Heart right ventricle (tissue), 16 donors: ENCODE measurements at regions of chr19 and their contacts with region 1.

Region 1: DNA sequence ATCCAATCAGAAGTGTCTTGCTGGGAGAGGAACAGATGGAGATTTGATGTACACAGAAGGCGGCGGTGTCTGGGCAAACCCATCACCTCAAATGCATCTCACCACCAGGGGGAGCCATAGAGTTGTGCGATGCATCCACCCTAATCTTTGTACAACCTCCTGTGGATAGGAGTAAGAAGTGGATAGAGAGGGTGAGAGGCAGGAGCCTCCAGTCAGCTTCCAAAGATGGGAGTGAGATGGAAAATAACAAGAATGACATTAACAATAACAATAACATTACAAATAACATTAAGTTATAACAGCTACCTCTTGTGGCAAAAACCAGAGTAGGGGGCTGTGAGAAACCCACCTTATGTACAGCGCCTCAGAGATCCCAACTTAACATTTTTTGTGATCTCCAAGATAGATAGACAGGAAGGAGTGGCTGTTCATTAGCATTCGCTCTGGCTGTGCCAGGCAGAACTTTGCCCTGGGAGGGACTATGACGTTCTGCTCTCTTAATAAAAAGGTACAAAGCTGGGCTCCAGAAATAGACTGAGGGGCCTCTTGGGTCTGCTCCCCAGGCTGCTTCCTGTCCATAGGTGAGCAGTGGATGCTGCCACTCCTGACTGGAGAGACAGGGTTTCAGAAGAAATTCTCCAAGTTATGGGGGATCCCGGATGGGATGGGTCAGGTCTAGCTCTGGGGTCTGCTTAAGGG is 5.2 kb upstream of the CEACAM18 start:
- DNase-seq: peak; percentile 50 to 79
- ATAC-seq: peak in 5 of 8 donors; percentile 62 to 79 (median 77)
- H3K4me3 ChIP-seq: no peak overlapping the region
- H3K27ac ChIP-seq: no peak overlapping the region
- H3K4me1 ChIP-seq: no peaks in the 10 kb centered on the region
- H3K27me3 ChIP-seq: peaks cover 0 to 73% (median 28%) of the 10 kb centered on the region in 7 donors
- CTCF ChIP-seq: peak; percentile 75 to 94 (median 89)

Region 2: DNA sequence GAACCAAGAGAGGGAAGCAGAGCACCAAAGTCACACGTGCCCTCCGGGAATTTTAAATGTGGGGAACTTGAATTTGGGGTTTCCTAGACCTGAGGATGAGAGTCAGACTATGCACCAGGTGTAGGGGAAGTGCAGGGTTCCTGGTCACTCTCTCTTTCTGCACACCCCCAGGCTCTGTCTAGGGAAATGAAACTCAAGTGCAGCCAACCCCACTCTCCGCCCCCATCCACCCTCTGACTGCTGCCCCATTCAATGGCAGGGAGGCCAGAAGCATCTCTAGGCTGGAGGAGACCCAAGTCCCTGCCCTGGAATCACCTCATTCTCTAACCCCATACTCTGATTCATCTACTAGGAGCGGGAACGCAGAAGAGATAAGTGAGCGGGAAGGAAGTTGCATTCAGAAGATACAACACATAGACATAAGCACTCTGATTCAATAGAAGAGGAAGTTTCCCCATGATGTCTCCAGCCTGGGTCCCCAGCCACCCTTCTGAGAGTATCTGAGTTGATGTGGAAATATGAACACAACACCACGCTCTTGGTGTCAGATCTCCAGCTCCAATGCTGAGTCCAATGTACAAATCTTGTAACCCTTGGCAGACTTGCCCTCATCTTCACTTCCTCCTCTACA is 178.2 kb after region 1 on chr19:
- intact Hi-C with region 1: loop called in 7 of 10 experiments (anchors 2 to 10 kb)
- DNase-seq: no peak
- ATAC-seq: peak in 2 of 8 donors; percentile 53 to 76
- H3K4me3 ChIP-seq: no peak overlapping the region
- H3K27ac ChIP-seq: peak overlapping the region in 1 of 10 donors; percentile 33
- H3K4me1 ChIP-seq: peaks cover 0 to 29% (median 0%) of the 10 kb centered on the region in 9 donors
- H3K27me3 ChIP-seq: peaks cover 0 to 29% (median 8%) of the 10 kb centered on the region in 7 donors
- CTCF ChIP-seq: no peak

Region 3: DNA sequence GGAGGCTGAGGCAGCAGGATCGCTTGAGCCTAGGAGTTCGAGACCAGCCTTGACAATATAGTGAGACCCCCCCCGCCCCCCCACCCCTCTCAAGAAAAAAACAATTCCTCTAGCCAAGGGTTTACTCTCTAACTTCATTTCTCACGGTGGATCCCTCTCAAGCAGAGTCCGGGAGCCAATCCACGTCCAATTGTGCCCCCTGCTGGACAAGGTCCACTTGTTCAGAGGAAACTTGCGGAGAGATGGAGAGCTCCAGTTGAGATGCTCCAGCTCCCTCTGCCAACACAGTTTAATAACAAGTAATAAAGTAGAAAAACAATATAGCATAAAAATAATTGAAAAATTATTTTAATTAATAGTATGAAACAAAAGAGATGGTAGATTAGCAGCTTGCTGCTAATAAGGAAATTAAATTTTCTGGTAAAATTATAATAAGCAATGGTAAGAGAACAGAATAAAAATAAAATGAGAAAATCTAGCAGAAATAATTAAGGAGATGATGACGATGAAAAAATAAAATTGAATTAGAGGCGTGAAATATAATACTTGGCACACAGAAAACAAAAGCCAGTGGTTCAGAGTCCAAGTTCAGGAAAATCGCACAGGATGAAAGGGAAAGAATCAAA is 187.9 kb after region 1 on chr19:
- intact Hi-C with region 1: loop called in 9 of 10 experiments (anchors 1 to 10 kb)
- DNase-seq: peak; percentile 49 to 81
- ATAC-seq: peak in 6 of 8 donors; percentile 58 to 78 (median 62)
- H3K4me3 ChIP-seq: no peak overlapping the region
- H3K27ac ChIP-seq: no peak overlapping the region
- H3K4me1 ChIP-seq: peaks cover 0 to 9% (median 0%) of the 10 kb centered on the region in 9 donors
- H3K27me3 ChIP-seq: peaks cover 0 to 55% (median 31%) of the 10 kb centered on the region in 7 donors
- CTCF ChIP-seq: peak; percentile 24 to 74 (median 66)

Region 4: DNA sequence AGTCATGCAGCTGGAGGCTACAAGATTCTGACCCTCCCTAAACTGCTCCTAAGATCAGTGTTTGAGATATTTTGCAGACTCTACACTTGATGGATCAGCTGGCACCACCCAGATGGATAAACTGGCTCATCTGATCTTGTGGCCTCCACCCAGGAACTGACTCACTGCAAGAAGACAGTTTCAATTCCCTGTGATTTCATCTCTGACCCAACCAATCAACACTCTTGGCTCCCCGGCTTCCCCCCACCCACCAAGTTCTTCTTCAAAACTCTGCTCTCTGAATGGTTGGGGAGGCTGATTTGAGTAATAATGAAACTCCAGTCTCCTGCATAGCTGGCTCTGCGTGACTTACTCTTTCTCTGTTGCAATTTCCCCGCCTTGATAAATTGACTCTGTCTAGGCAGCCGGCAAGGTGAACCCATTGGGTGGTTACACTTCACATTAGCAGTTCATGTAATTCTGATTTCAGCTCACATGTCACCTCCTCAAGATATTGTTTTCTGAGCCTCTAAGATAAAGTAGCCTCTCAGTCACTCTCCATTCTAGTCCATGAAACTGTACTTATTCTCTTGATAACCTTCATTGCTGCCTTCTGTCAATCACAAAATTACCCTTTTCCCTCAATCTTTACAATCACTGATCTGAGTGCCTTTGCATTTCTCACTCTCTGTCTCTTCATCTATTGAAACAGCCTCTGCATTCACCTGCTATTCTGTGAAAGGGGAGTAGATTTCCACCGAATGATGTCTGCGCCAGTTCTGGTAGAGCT is 311.9 kb after region 1 on chr19:
- intact Hi-C with region 1: loop called in 2 of 10 experiments (anchors 10 kb)
- DNase-seq: peak; percentile 29 to 66
- ATAC-seq: peak; percentile 65 to 91 (median 77)
- H3K4me3 ChIP-seq: no peak overlapping the region
- H3K27ac ChIP-seq: peak overlapping the region in 7 of 10 donors; percentile 43 to 85 (median 54)
- H3K4me1 ChIP-seq: peaks cover 0 to 70% (median 5%) of the 10 kb centered on the region in 9 donors
- H3K27me3 ChIP-seq: peaks cover 0 to 4% (median 0%) of the 10 kb centered on the region in 7 donors
- CTCF ChIP-seq: no peak